CD8-positive, alpha-beta memory T cell (primary cell): ENCODE measurements at regions of chr14 and their contacts with region 1.

Region 1: DNA sequence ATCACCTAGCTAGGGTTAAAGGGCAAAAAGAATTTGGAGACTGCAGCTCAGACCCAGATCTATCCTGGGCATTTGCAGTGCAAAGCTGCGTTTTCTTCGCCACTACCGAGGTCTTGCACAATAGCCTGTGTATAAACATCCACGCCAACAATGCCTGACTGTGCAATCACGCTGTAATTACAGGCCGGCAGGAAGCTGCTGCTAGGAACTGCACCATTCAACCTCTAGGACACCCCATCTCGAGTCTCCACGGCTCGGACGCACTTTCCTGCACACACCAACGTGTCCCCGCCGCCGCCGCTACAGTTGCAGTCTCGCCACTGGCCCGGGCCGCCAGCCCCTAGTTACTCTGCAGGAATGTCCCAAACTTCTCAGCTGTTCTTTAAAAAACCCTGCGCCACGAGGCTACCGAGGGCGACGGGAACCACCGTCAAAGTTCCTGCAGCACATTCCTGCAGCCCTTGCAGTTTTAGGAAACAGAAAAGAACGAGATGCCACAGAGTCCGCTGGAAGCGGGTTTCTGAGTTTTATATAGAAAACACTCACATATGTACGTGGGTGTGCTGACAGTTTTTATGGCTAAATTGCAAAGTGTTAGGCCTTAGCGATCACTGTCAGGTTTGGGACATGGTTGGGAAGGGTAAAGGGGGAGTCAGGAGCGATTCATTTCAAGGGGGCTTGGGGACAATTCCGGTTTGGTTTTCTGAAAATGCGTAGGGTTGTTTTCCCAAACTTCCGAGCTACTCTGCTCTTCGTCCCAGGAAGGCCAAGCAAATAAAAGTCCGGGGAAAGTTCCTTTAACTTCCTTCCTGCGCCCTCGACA is 65.5 kb upstream of the PTGR2 start:
- DNase-seq: peak; percentile 48 to 79 (median 60)
- H3K4me3 ChIP-seq: peak overlapping the region; percentile 73
- H3K4me3 Mint-ChIP-seq: peak overlapping the region; percentile 90 to 99 (median 97)
- H3K27ac ChIP-seq: peak overlapping the region; percentile 66
- H3K27ac Mint-ChIP-seq: peak overlapping the region; percentile 92 to 100 (median 98)
- H3K4me1 ChIP-seq: peaks cover 56% of the 10 kb centered on the region
- H3K4me1 Mint-ChIP-seq: peaks cover 58 to 66% (median 63%) of the 10 kb centered on the region in 3 donors
- H3K27me3 ChIP-seq: no peaks in the 10 kb centered on the region
- H3K27me3 Mint-ChIP-seq: peaks cover 0 to 3% of the 10 kb centered on the region in 2 donors

Region 2: DNA sequence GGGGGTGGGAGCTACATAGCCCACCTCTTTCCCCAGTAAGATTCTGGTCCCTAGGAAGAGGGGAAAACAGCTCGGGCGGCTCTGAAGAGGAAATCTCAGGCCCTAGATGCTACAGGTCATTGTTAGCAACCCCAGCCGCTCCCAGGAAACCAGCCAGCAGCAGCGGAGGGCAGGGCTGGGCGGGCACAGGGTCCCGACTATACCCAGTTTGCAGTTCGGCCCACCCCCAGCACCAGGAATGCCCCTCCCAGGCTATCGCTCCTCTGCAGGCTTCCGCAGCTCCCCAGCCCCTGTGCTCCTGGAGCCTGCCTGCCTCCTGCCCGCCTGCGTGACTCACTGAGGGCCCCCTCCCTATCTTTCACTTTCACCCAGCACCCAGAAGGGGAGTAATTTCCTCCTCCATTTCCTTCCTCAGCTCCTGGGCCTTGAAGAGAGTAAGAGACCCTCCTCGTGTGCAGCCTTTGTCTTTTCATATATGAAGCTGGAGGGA is 44.7 kb before region 1 on chr14:
- CTCF ChIA-PET with region 1: interaction called, 13 read pairs
- POLR2A ChIA-PET with region 1: interaction called, 15 read pairs
- DNase-seq: peak; percentile 62 to 79 (median 66)
- H3K4me3 ChIP-seq: peak overlapping the region; percentile 62
- H3K4me3 Mint-ChIP-seq: peak overlapping the region; percentile 79 to 94 (median 85)
- H3K27ac ChIP-seq: peak overlapping the region; percentile 68
- H3K27ac Mint-ChIP-seq: peak overlapping the region; percentile 91 to 98 (median 95)
- H3K4me1 ChIP-seq: peaks cover 66% of the 10 kb centered on the region
- H3K4me1 Mint-ChIP-seq: peaks cover 59 to 88% (median 64%) of the 10 kb centered on the region in 3 donors
- H3K27me3 ChIP-seq: no peaks in the 10 kb centered on the region
- H3K27me3 Mint-ChIP-seq: no peaks in the 10 kb centered on the region

Region 3: DNA sequence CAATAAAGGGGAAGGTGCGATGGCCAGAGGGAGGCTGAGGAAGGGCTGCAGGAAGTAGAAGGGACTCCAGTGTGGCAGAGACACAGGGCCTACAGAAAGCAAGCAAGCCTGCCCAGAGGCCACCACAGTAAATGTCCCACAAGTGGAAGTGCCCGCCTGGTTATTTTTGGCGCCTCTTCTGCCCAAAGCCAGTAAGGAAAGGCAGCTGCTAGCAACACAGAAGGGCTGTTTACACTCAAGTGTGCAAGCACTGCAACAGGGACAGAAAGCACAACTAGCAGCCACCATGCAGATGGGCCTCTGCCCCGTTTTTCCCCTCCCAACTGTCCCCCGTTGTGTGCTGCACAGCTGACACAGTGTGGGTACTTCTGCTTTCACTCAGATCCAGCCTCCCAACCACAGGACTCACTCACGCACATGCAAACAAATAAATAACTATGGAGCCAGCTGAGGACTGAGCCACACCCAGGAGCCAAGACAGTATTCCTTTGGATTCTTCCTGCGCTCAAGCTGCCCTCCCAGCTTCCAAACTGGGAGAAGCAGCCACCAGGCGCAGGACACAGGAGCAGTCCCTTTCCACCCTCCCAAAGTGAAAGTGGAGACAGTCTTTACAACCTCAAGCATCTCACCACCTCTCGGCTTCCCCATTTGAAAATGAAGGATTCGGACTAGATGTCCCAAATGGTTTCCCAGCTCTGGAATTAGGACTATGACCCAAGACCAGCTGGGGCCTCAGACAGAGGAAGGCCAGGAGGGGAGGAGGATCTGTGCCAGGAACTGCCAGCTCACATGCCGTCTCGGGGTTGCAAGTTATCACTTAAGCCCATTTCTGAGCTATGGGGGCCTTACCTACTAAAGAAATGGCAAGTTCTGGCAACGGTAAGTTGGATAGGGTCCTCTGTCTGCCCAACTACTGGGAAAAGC is 31.9 kb before region 1 on chr14:
- CTCF ChIA-PET with region 1: interaction called, 358 read pairs
- POLR2A ChIA-PET with region 1: interaction called, 215 read pairs
- DNase-seq: peak in 1 of 5 donors; percentile 43
- H3K4me3 ChIP-seq: peak overlapping the region; percentile 42
- H3K4me3 Mint-ChIP-seq: peak overlapping the region; percentile 85 to 97 (median 90)
- H3K27ac ChIP-seq: peak overlapping the region; percentile 65
- H3K27ac Mint-ChIP-seq: peak overlapping the region; percentile 94 to 100 (median 98)
- H3K4me1 ChIP-seq: peaks cover 91% of the 10 kb centered on the region
- H3K4me1 Mint-ChIP-seq: peaks cover 91 to 95% (median 92%) of the 10 kb centered on the region in 3 donors
- H3K27me3 ChIP-seq: no peaks in the 10 kb centered on the region
- H3K27me3 Mint-ChIP-seq: peaks cover 0 to 5% of the 10 kb centered on the region in 2 donors

Region 4: DNA sequence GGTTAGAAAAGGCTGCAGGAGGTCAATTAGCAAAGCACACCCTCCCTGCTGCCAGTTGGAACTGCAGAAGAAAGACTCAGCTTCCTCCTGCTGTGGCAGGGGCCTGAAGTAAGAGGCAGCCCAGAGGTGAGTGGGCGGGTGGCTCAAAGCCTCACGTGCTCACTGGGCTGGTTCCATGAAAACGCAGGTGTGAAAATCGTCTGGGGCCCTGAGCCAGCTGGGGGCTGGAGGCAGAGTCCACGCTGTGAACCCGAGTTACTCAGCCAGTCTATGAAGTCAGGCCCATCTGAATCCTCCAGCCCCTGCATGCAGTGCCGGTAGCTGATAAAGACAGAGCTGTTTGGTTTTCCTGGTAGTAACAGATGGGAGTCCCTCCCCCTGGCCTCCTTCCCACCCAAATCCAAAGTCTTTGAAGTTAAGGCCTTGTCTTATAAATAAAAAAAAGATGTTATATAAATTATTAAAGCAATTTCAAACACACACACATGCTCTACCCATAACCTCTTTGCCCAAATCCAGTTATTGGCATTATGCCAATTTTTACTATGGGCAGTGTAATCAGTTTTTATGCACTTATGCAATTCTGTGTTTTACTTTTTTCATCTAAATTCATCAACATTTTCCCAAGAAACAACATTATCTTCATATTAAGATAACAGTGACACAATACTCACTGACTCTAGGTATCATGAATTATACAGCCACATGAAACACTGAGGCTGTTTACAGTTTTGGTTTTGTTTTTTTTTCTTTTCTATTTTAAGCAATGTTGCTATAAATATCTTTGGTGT is 14.0 kb before region 1 on chr14:
- CTCF ChIA-PET with region 1: interaction called, 77 read pairs
- POLR2A ChIA-PET with region 1: interaction called, 96 read pairs
- DNase-seq: peak; percentile 53 to 83 (median 68)
- H3K4me3 ChIP-seq: peak overlapping the region; percentile 28
- H3K4me3 Mint-ChIP-seq: peak overlapping the region; percentile 60 to 82 (median 71)
- H3K27ac ChIP-seq: peak overlapping the region; percentile 49
- H3K27ac Mint-ChIP-seq: peak overlapping the region; percentile 85 to 99 (median 94)
- H3K4me1 ChIP-seq: peaks cover 66% of the 10 kb centered on the region
- H3K4me1 Mint-ChIP-seq: peaks cover 68 to 83% (median 73%) of the 10 kb centered on the region in 3 donors
- H3K27me3 ChIP-seq: no peaks in the 10 kb centered on the region
- H3K27me3 Mint-ChIP-seq: no peaks in the 10 kb centered on the region

Region 5: DNA sequence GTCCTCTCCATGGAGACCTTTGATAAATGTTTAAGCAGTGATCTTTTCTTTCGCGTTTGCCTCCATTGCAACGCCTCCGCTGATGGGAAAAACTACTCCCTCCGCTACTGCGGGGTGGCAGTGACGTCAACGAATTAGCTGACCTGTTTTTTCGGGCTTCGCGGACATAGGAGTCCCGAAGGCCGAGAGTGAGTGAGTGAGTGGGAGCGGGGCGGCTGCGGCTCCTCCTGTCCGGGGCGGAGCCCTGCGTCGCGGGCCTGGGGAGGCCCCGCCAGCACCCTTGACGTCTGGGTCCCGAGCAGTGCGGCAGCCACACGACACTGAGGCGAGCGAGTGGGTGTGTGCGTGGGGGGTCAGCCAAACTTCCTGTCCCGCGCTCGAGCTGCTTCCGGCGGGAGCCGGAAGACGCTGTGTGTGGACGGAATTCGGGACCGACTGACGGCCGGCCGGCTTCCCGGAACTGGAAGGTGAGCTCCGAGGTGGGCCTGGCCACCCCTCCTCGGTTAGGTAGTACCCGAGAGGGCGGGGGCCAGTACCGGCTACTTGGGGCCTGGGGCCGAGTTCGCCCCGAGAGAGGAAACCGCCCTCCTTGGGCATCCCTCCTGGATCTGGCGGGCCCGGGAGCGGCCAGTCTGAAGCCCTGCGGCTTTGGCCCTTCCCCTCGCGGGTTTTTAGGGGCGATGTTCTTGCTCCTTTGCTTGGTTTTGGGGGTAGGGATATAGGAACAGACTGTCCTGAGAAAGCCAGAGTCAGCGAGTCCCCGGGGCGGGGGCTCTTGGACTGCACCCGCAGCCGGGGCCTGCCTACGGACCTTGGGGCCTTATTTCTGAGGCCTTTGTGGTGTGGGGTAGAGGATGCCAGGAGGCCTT is 100.6 kb after region 1 on chr14 and contains the start of gene ZNF410:
- CTCF ChIA-PET with region 1: interaction called, 3 read pairs
- POLR2A ChIA-PET with region 1: interaction called, 11 read pairs
- DNase-seq: peak; percentile 79 to 89 (median 86)
- H3K4me3 ChIP-seq: peak within 1 kb of the TSS; percentile 86
- H3K4me3 Mint-ChIP-seq: peak within 1 kb of the TSS; percentile 91 to 99 (median 96)
- H3K27ac ChIP-seq: peak within 1 kb of the TSS; percentile 92
- H3K27ac Mint-ChIP-seq: peak within 1 kb of the TSS; percentile 87 to 99 (median 98)
- H3K4me1 ChIP-seq: peaks cover 30% of the 10 kb centered on the region
- H3K4me1 Mint-ChIP-seq: peaks cover 43 to 62% (median 58%) of the 10 kb centered on the region in 3 donors
- H3K27me3 ChIP-seq: no peaks in the 10 kb centered on the region
- H3K27me3 Mint-ChIP-seq: no peaks in the 10 kb centered on the region
- total RNA-seq, gene ZNF410: 65.2 to 72.4 TPM